ENCODE measurements at regions of chr11 and their contacts with region 1.

Region 1: DNA sequence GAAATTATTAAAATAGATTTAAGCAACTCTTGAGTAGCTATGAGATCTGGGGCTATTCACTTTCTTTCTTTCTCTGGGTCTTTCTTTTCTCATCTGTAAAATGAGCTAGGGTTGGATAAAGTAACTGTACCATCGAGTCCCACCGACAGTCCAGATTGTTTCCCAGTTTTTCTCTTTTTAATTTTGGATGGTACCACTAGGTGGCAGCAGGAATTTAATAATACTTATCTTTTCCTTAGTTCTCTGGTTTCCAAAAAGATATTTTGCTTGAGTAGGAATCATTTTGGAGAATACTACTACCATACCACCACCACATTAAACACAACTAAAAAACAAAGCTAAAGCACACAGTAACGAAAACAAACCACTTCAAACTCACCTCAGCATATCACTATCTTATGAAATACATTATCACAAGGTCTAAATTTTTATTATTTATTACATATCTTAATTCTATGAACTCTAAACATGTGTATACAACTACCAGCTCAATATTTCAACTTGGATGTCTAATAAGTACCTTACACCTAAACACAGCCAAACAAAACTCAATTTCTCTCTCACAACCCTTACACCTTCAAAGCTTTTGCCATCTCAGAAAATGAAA is 584.0 kb downstream of the KCNA4 start:
- DNase-seq: peak; percentile 16
- CTCF ChIP-seq: no peak

Region 2: DNA sequence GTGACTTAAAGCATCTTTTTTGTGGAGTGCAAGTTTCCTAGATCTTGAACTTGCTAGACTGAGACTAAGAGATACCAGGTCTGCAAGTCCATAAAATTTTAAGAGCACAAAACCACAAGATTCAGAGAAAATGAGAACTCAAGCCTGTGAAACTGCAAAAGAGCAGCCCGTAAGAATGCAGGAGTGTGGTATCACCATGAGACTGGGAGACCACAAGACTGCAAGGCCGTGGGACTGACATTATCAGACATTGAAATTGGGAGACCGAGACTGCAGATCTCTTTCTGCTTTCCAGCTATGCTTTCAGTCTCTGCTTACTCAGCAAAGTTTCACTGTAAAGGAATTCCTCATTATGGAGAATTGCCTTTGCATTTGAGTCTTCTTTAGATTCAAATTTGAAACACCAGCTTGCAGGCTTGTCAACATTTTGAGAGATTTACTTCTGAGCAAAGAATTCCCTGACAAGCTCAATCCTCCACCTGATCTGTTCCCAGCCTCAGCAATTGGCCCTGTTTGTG is 37.2 kb before region 1 on chr11:
- CTCF ChIA-PET with region 1: no interaction called
- POLR2A ChIA-PET with region 1: no interaction called
- DNase-seq: no peak
- CTCF ChIP-seq: no peak

Region 3: DNA sequence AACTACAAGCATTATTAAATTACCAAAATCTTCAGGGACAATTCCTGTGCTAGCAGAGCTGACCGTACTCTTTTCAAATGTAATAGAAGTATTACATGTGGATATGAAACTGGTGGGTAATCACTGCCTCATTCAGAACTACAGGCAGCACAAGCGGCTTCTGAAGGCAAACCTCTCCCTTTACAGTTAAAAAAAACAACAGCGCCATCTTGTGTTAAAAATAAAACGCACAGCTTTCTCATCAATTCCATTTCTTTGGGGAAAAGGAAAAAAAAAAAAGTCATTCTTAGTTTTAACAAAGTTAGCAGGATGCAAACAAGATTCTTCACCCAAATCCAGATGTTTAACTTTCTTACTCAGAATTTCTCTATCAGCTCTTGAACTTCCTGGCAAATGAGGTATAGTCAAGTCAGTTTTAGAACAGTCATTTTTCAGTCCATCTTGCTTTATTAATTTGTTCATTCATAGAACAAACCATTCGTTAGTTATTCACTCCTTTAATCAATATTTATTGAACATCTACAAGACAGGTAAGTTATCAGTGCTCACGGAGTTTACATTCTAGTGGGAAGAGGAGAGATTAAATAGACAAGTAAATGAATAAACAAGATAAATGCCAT is 1485.1 kb after region 1 on chr11:
- CTCF ChIA-PET with region 1: interaction called, 12 read pairs
- POLR2A ChIA-PET with region 1: no interaction called
- DNase-seq: peak; percentile 22
- CTCF ChIP-seq: peak; percentile 49